CD8-positive, alpha-beta T cell (primary cell): ENCODE measurements at regions of chr3 and their contacts with region 1.

Region 1: GRCh38 chr3:108079877-108080659 is 10.8 kb downstream of the CD47 start:
- DNase-seq: peak in 1 of 9 experiments; percentile 39
- ATAC-seq: peak; percentile 59
- H3K4me3 ChIP-seq: no peak overlapping the region
- H3K4me3 Mint-ChIP-seq: peak overlapping the region; percentile 40
- H3K27ac ChIP-seq: peak overlapping the region in 1 of 2 experiments; percentile 41
- H3K27ac Mint-ChIP-seq: peak overlapping the region; percentile 81
- H3K4me1 ChIP-seq: peaks cover 86% of the 10 kb centered on the region
- H3K4me1 Mint-ChIP-seq: peaks cover 23% of the 10 kb centered on the region
- H3K27me3 ChIP-seq: no peaks in the 10 kb centered on the region
- H3K27me3 Mint-ChIP-seq: no peaks in the 10 kb centered on the region
- CTCF ChIP-seq: no peak

Region 2: GRCh38 chr3:108301695-108302404 is 221.8 kb after region 1 on chr3:
- CTCF ChIA-PET with region 1: no interaction called
- POLR2A ChIA-PET with region 1: no interaction called
- intact Hi-C with region 1: loop called in 1 of 2 experiments (anchors 5 kb)
- DNase-seq: peak in 1 of 9 experiments; percentile 11
- ATAC-seq: no peak
- H3K4me3 ChIP-seq: no peak overlapping the region
- H3K4me3 Mint-ChIP-seq: peak overlapping the region; percentile 12
- H3K27ac ChIP-seq: no peak overlapping the region
- H3K27ac Mint-ChIP-seq: no peak overlapping the region
- H3K4me1 ChIP-seq: no peaks in the 10 kb centered on the region
- H3K4me1 Mint-ChIP-seq: peaks cover 14% of the 10 kb centered on the region
- H3K27me3 ChIP-seq: no peaks in the 10 kb centered on the region
- H3K27me3 Mint-ChIP-seq: no peaks in the 10 kb centered on the region
- CTCF ChIP-seq: no peak